Tibial artery (tissue), 4 donors: ENCODE measurements at regions of chrX and their contacts with region 1.

Region 1: DNA sequence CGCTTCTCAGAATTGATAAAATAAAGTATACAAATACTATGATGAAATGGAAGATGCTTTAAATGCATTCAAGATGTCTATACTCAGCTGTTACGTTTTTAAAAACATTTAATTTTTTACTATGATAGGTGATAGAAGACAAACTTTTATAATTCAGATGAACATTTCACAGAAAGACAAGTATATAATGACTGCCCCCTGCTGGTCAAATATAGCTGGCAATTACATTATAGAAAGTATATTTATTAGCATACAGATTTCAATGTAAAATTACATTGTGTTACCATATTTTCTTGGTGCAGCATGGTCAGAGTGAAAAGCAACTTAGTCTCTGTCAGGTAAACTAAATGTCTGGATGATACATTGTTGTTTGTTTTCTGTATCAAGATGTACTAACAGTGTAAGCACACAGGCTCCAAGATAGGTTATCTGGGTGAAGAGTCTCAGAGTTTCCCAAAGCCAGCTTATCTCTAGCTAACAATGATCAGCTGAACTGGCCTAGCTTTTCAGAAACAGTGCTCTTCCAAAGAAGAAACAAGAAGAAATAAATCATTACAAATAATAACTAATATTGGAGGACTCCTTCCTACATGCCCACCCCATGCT is 54.1 kb downstream of the SRPX start:
- DNase-seq: no peak
- H3K4me3 ChIP-seq: no peak overlapping the region
- H3K27ac ChIP-seq: no peak overlapping the region
- H3K4me1 ChIP-seq: no peaks in the 10 kb centered on the region
- H3K27me3 ChIP-seq: no peaks in the 10 kb centered on the region
- CTCF ChIP-seq: peak; percentile 43 to 48

Region 2: DNA sequence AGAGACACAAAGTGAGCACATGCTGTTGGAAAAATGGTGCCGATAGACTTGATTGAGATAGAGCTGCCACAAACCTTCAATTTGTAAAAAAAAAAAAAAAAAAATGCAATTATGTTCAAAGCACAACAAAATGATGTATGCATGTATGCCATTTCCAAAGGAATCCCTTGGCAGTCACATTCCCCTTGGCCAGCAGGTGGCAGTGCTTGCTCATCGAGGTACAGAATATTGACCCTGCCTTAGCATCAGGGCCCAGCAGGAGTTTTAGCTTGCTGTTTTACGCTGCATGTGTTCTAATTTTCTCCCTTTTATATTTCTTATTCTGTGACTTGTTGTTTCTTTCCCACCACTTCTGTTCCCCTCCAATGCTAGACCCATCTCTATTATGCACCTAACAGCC is 421.2 kb before region 1 on chrX:
- intact Hi-C with region 1: loop called (anchors 10 kb)
- DNase-seq: peak; percentile 56 to 73
- H3K4me3 ChIP-seq: no peak overlapping the region
- H3K27ac ChIP-seq: no peak overlapping the region
- H3K4me1 ChIP-seq: no peaks in the 10 kb centered on the region
- H3K27me3 ChIP-seq: no peaks in the 10 kb centered on the region
- CTCF ChIP-seq: peak; percentile 63